ENCODE measurements at regions of chr4 and their contacts with region 1.

Region 1: GRCh38 chr4:118740869-118741268 is 55.7 kb downstream of the METTL14 start:
- DNase-seq: no peak
- ATAC-seq: no peak
- H3K4me3 ChIP-seq: no peak overlapping the region
- H3K27ac ChIP-seq: no peak overlapping the region
- H3K4me1 ChIP-seq: 0 out of 2 replicates have a peak, but pooled peaks cover 6% of the 10 kb centered on the region
- H3K27me3 ChIP-seq: no peaks in the 10 kb centered on the region
- CTCF ChIP-seq: peak; percentile 8; the same call in 1 of the 2 replicates
- EP300 ChIP-seq: no peak
- POLR2A ChIP-seq: no peak
- RAD21 ChIP-seq: no peak

Region 2: DNA sequence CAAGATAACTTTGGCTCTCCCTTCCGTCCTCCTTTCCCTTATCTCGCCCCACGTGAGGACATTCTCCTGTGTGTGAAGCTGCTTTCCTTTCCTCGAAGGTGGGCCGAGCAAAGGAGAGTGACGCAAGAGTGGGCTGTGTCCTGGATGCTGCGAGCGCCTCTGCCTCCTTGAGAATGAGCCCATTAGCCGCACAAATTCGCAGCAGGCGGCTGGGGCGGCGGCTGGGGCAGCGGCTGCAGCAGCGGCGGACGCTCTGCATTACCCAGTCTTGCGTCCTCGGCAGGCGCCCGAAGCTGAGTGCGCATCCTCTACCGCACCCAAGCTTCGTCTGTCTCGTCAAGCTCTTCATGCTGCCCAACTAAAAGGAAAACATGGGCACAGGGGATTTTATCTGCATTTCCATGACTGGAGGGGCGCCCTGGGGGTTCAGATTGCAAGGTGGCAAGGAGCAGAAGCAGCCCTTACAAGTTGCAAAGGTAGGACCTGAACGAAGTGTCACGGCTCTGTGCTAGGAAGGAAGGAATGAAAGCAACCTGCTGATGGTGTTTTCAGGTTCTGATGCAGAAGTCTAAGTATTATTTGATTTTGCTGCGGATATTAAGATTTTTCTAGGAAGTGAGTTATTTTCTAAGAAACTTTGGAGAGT is 147.9 kb after region 1 on chr4 and contains the start of gene SYNPO2:
- CTCF ChIA-PET with region 1: interaction called, 6 read pairs
- POLR2A ChIA-PET with region 1: no interaction called
- in situ Hi-C with region 1: no loop called
- intact Hi-C with region 1: loop called (anchors 1 kb)
- DNase-seq: no peak
- ATAC-seq: peak; percentile 89
- H3K4me3 ChIP-seq: peak within 1 kb of the TSS in 2 of 3 experiments; percentile 16 to 56; a peak in 2 of 6 replicates
- H3K27ac ChIP-seq: no peak within 1 kb of the TSS
- H3K4me1 ChIP-seq: peaks cover 10% of the 10 kb centered on the region; the same call in 1 of the 2 replicates
- H3K27me3 ChIP-seq: peaks cover 0 to 22% of the 10 kb centered on the region in 2 experiments; a peak in 2 of 5 replicates
- CTCF ChIP-seq: no peak
- EP300 ChIP-seq: no peak
- POLR2A ChIP-seq: no peak
- RAD21 ChIP-seq: no peak
- total RNA-seq, gene SYNPO2: 0.04 TPM in 1 of 2 replicates, not detected in the other

Region 3: GRCh38 chr4:118968005-118968404 is 227.1 kb after region 1 on chr4:
- CTCF ChIA-PET with region 1: no interaction called
- POLR2A ChIA-PET with region 1: no interaction called
- in situ Hi-C with region 1: no loop called
- intact Hi-C with region 1: loop called (anchors 1 kb)
- DNase-seq: no peak
- ATAC-seq: peak; percentile 45
- H3K4me3 ChIP-seq: no peak overlapping the region
- H3K27ac ChIP-seq: no peak overlapping the region
- H3K4me1 ChIP-seq: peaks cover 13% of the 10 kb centered on the region
- H3K27me3 ChIP-seq: no peaks in the 10 kb centered on the region
- CTCF ChIP-seq: no peak
- EP300 ChIP-seq: no peak
- POLR2A ChIP-seq: no peak
- RAD21 ChIP-seq: no peak